AG04450 (cell line): ENCODE measurements at regions of chr16 and their contacts with region 1.

Region 1: GRCh38 chr16:53159781-53160436 is 105.1 kb downstream of the CHD9 start:
- DNase-seq: peak; percentile 18
- H3K4me3 ChIP-seq: no peak overlapping the region
- H3K27ac ChIP-seq: no peak overlapping the region
- H3K27me3 ChIP-seq: no peaks in the 10 kb centered on the region
- CTCF ChIP-seq: peak; percentile 78

Region 2: GRCh38 chr16:52755396-52755795 is 404.5 kb before region 1 on chr16:
- CTCF ChIA-PET with region 1: no interaction called
- POLR2A ChIA-PET with region 1: no interaction called
- DNase-seq: no peak
- H3K4me3 ChIP-seq: no peak overlapping the region
- H3K27ac ChIP-seq: no peak overlapping the region
- H3K27me3 ChIP-seq: no peaks in the 10 kb centered on the region
- CTCF ChIP-seq: no peak

Region 3: DNA sequence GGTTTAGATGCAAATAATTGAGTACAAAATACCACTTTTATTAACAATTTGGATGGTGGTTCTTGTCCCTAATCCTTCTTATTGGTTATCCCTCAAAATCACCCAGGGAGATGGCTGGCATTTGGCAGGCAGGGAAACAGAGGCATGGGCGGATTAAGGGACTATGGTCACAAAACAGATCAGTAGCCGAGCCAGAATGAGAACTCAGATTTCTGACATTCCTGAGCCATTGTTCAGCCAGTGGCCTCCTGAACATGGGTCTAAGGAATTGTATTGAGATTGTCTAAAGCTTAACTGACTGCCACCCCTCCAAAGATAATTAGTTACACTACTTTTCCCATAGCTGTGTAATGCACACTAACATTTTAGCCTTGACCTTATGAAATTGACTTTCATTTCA is 195.6 kb before region 1 on chr16:
- CTCF ChIA-PET with region 1: no interaction called
- POLR2A ChIA-PET with region 1: no interaction called
- DNase-seq: no peak
- H3K4me3 ChIP-seq: no peak overlapping the region
- H3K27ac ChIP-seq: no peak overlapping the region
- H3K27me3 ChIP-seq: no peaks in the 10 kb centered on the region
- CTCF ChIP-seq: no peak

Region 4: DNA sequence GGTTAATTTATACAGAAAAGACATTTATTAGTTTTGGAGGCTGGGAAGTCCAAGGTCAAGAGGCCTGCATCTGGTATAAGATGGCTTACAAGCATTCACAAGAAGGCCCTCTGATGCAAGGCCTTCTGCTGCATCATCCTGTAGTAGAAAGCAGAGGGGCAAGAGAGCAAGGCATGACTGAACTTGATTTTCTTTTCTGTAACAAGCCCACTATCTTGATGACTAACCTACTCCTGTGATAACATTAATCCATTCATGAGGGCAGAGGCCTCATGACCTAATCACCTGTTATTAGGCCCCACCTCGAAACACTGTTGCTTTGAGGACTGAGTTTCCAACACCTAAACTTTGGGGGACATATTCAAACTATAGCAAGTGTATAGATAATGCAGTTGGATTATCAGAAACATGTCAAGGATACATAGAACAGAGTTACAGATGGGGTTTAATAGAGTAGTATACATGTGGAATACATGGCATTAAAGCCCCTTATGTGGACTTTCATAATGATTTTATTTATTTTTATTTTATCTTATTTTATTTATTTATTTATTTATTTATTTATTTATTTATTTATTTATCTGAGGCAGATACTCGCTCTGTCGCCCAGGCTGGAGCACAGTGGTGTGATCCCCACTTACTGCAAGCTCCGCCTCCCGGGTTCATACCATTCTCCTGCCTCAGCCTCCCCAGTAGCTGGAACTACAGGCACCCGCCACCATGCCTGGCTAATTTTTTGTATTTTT is 16.9 kb before region 1 on chr16:
- CTCF ChIA-PET with region 1: interaction called, 11 read pairs
- POLR2A ChIA-PET with region 1: no interaction called
- DNase-seq: no peak
- H3K4me3 ChIP-seq: no peak overlapping the region
- H3K27ac ChIP-seq: no peak overlapping the region
- H3K27me3 ChIP-seq: no peaks in the 10 kb centered on the region
- CTCF ChIP-seq: no peak

Region 5: DNA sequence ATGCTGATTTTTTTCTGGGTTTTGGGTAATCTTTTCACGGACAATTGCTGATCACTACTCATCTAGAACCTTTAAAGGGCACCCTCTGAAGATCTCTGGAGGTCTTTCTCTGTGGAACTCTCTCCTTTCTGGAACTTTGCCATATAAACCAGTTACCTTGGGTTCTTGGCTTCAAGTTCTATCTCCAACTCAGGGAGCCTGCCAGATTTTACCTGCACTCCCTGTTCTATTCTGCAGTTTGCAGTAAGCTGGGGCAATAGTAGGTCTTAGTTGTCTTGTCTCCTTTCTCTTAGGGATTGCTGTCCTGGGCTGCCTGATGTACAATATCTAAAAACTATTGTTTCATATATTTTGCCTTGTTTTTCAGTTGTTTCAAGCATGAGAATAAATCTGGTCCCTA is 15.2 kb after region 1 on chr16:
- CTCF ChIA-PET with region 1: interaction called, 20 read pairs
- POLR2A ChIA-PET with region 1: no interaction called
- DNase-seq: no peak
- H3K4me3 ChIP-seq: no peak overlapping the region
- H3K27ac ChIP-seq: no peak overlapping the region
- H3K27me3 ChIP-seq: no peaks in the 10 kb centered on the region
- CTCF ChIP-seq: no peak